Naive thymus-derived CD8-positive, alpha-beta T cell (primary cell): ENCODE measurements at regions of chr2 and their contacts with region 1.

Region 1: DNA sequence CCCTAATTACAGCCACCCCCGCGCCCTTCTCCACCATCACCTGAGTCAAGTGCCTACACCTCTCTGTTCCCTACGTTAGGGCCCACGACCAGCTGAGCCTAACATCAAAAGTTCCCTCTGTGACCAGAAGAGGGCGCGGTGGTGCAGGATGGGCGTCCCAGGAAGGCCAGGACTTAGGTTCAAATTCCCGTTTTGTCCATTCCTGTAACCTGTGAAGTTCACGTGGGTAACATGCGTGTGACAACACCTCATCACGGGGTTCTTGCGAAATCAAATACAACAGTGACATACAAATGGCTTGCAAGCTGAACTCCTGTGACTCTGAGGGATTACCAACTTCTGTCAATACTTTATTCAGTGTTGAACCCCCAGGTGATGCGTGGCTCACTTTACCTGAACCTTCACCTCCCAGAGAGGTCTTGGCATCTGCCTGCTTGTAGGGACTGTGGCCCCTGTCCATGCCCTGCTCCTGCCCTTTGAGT is 207.9 kb downstream of the ARL4C start:
- DNase-seq: peak; percentile 37 to 83 (median 64)
- ATAC-seq: no peak
- H3K4me3 Mint-ChIP-seq: peak overlapping the region in 9 of 10 donors; percentile 2 to 61 (median 32)
- H3K27ac Mint-ChIP-seq: peak overlapping the region; percentile 94 to 100 (median 99)
- H3K4me1 Mint-ChIP-seq: peaks cover 32 to 71% (median 61%) of the 10 kb centered on the region in 4 donors
- H3K27me3 Mint-ChIP-seq: no peaks in the 10 kb centered on the region

Region 2: DNA sequence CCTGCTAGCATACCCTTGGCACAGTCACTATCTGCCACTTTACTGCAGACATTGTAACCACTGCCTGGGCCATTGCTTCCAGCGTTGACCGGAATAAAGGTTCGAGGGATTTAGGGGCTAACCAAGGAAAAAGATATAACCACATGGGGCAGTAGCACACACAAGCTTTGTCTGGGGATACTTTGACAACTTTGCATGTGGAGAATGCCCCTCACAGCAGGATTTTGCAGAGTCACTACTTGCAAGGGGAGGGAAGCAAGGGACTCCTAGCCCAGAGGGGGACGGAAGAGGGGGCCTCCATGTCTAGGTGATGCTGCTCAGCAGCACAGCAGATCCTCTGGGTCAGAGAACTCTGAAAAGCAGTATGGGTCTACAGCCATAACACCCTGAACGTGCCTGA is 99.8 kb before region 1 on chr2:
- POLR2A ChIA-PET with region 1: no interaction called
- DNase-seq: no peak
- ATAC-seq: no peak
- H3K4me3 Mint-ChIP-seq: no peak overlapping the region
- H3K27ac Mint-ChIP-seq: no peak overlapping the region
- H3K4me1 Mint-ChIP-seq: peaks cover 0 to 15% (median 2%) of the 10 kb centered on the region in 4 donors
- H3K27me3 Mint-ChIP-seq: peaks cover 0 to 3% (median 0%) of the 10 kb centered on the region in 5 donors

Region 3: GRCh38 chr2:234218266-234219180 is 70.5 kb before region 1 on chr2:
- POLR2A ChIA-PET with region 1: no interaction called
- DNase-seq: peak in 3 of 10 donors; percentile 5 to 18 (median 14)
- ATAC-seq: peak in 1 of 2 donors; percentile 67
- H3K4me3 Mint-ChIP-seq: peak overlapping the region in 8 of 10 donors; percentile 36 to 75 (median 50)
- H3K27ac Mint-ChIP-seq: peak overlapping the region; percentile 17 to 83 (median 64)
- H3K4me1 Mint-ChIP-seq: peaks cover 28 to 47% (median 43%) of the 10 kb centered on the region in 4 donors
- H3K27me3 Mint-ChIP-seq: no peaks in the 10 kb centered on the region

Region 4: DNA sequence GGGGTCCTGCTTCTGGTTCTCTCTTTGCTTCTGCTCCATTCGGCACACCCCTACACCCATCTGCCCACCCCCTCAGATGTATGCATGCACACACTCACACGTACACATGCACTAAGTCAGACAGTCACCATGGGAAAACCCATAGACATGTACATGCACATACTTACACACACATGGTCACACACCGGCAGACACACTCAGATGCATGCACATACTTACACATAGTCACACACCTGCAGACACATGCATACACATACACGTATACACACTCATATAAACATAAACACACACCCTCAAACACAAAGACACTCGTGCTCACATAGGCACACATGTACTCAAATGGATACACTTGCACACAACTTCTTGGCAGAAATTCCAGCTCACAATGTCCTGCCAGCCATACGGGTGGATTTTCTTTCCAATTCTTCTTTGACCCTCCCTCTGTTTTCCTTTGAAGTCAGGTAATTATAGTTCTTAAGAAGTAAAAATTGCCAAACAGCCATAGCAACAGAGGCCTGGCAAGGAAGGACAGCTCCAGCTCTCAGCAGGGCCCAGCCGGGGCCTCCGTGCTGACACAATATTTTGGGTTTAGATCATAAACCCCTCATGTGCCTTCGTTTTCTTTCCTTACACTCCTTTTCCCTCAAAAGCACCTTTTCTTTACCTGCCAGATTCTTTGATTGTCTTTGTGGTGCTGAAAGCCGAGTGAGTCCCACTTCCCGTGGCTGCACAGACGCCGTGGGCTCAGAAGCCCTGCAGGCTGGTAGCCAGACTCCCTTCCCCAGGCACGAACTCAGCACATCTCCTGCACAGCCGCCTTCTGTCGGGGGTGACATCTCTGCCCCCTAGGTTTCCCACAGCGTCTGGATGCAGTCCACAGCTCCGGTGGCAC is 12.2 kb after region 1 on chr2:
- POLR2A ChIA-PET with region 1: interaction called, 18 read pairs
- DNase-seq: no peak
- ATAC-seq: peak; percentile 25 to 71
- H3K4me3 Mint-ChIP-seq: peak overlapping the region in 9 of 10 donors; percentile 2 to 82 (median 51)
- H3K27ac Mint-ChIP-seq: peak overlapping the region; percentile 61 to 89 (median 78)
- H3K4me1 Mint-ChIP-seq: peaks cover 28 to 60% (median 50%) of the 10 kb centered on the region in 4 donors
- H3K27me3 Mint-ChIP-seq: peaks cover 0 to 3% (median 0%) of the 10 kb centered on the region in 5 donors

Region 5: DNA sequence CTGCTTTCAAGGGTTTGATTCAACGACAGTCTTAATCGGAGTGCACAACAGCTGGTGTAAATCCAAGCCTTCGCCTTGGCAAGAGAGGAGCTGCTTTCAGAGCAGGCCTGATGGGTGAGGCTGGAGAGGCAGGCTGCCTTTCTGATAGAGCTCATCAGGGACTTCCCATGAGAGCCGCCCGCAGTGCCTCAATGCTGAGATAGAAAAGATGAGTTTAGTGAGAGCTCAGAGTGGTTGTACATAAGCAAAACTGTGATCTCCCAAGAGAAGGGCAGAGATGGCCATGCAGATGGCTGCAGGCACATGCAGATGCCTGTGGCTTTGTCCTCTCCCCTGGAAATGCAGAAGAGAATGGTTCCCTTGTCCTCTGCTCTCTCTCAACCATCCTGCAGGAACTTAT is 85.7 kb after region 1 on chr2:
- POLR2A ChIA-PET with region 1: interaction called, 29 read pairs
- DNase-seq: no peak
- ATAC-seq: no peak
- H3K4me3 Mint-ChIP-seq: no peak overlapping the region
- H3K27ac Mint-ChIP-seq: peak overlapping the region in 6 of 10 donors; percentile 47 to 96 (median 84)
- H3K4me1 Mint-ChIP-seq: peaks cover 27 to 54% (median 52%) of the 10 kb centered on the region in 4 donors
- H3K27me3 Mint-ChIP-seq: no peaks in the 10 kb centered on the region

Region 6: GRCh38 chr2:234420408-234420807 is 131.4 kb after region 1 on chr2:
- POLR2A ChIA-PET with region 1: interaction called, 94 read pairs
- DNase-seq: peak in 8 of 10 donors; percentile 11 to 80 (median 58)
- ATAC-seq: peak; percentile 35 to 39
- H3K4me3 Mint-ChIP-seq: peak overlapping the region in 7 of 10 donors; percentile 24 to 75 (median 64)
- H3K27ac Mint-ChIP-seq: peak overlapping the region; percentile 93 to 100 (median 100)
- H3K4me1 Mint-ChIP-seq: peaks cover 36 to 72% (median 71%) of the 10 kb centered on the region in 4 donors
- H3K27me3 Mint-ChIP-seq: no peaks in the 10 kb centered on the region

Region 7: DNA sequence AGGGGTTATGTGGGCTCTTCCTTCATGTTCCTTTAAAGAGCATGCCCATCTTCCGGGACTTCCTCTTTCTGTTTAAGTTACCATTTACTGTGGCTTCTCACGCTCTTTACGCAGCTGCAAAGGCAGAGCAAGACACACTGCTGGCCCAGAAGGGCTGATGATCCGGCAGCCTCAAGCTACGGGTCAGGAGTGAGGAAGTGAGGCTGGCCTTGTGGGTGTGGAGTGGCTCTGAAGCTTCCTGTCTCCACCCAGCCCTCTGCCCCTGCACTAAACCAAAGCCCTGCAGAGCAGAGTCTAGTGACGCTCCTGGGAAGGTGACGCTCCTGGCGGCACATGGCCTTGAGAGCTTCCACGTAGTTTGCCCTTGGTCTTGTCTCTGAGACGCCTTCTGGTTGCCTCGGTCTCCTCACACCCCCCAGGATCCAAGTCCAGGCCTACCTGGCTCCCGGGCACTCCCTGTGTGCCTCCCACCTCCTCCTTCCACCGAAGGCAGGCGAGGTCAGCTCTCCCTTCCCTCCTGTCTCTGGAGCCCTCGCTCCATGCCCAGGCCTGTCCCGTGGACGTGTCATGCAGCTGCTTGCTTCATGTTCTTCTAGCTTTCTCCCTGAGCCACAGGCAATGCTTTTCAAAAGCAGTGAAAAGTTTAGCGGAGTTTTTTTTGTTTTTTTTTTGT is 157.5 kb after region 1 on chr2:
- POLR2A ChIA-PET with region 1: interaction called, 144 read pairs
- DNase-seq: peak; percentile 36 to 91 (median 84)
- ATAC-seq: peak; percentile 65 to 87
- H3K4me3 Mint-ChIP-seq: peak overlapping the region; percentile 38 to 89 (median 80)
- H3K27ac Mint-ChIP-seq: peak overlapping the region; percentile 95 to 100 (median 99)
- H3K4me1 Mint-ChIP-seq: peaks cover 48 to 95% (median 90%) of the 10 kb centered on the region in 4 donors
- H3K27me3 Mint-ChIP-seq: no peaks in the 10 kb centered on the region

Region 8: GRCh38 chr2:234483568-234484251 is 194.7 kb after region 1 on chr2:
- POLR2A ChIA-PET with region 1: interaction called, 14 read pairs
- DNase-seq: peak; percentile 59 to 94 (median 86)
- ATAC-seq: peak; percentile 74 to 79
- H3K4me3 Mint-ChIP-seq: peak overlapping the region; percentile 41 to 84 (median 79)
- H3K27ac Mint-ChIP-seq: peak overlapping the region; percentile 89 to 99 (median 97)
- H3K4me1 Mint-ChIP-seq: peaks cover 24 to 92% (median 73%) of the 10 kb centered on the region in 4 donors
- H3K27me3 Mint-ChIP-seq: no peaks in the 10 kb centered on the region